SK-N-SH (cell line): ENCODE measurements at regions of chr7 and their contacts with region 1.

Region 1: GRCh38 chr7:44463169-44463808 is 27.2 kb downstream of the NUDCD3 start:
- DNase-seq: no peak
- H3K4me3 ChIP-seq: no peak overlapping the region
- H3K27ac ChIP-seq: no peak overlapping the region
- H3K4me1 ChIP-seq: peaks cover 2 to 28% of the 10 kb centered on the region in 2 experiments; a peak in 2 of 4 replicates
- H3K27me3 ChIP-seq: no peaks in the 10 kb centered on the region
- CTCF ChIP-seq: peak; percentile 56
- EP300 ChIP-seq: no peak
- RAD21 ChIP-seq: no peak

Region 2: GRCh38 chr7:44386139-44386913 is 77.0 kb before region 1 on chr7:
- CTCF ChIA-PET with region 1: no interaction called
- POLR2A ChIA-PET with region 1: no interaction called
- DNase-seq: no peak
- H3K4me3 ChIP-seq: no peak overlapping the region
- H3K27ac ChIP-seq: no peak overlapping the region
- H3K4me1 ChIP-seq: peaks cover 0 to 13% of the 10 kb centered on the region in 2 experiments; a peak in 2 of 4 replicates
- H3K27me3 ChIP-seq: no peaks in the 10 kb centered on the region
- CTCF ChIP-seq: no peak
- EP300 ChIP-seq: no peak
- RAD21 ChIP-seq: no peak

Region 3: GRCh38 chr7:44449584-44449928 is 13.7 kb before region 1 on chr7:
- CTCF ChIA-PET with region 1: interaction called, 10 read pairs
- POLR2A ChIA-PET with region 1: no interaction called
- DNase-seq: no peak
- H3K4me3 ChIP-seq: no peak overlapping the region
- H3K27ac ChIP-seq: peak overlapping the region in 1 of 2 experiments; percentile 84; a peak in 2 of 4 replicates
- H3K4me1 ChIP-seq: peaks cover 6 to 10% of the 10 kb centered on the region in 2 experiments; a peak in 2 of 4 replicates
- H3K27me3 ChIP-seq: no peaks in the 10 kb centered on the region
- CTCF ChIP-seq: no peak
- EP300 ChIP-seq: no peak
- RAD21 ChIP-seq: no peak

Region 4: DNA sequence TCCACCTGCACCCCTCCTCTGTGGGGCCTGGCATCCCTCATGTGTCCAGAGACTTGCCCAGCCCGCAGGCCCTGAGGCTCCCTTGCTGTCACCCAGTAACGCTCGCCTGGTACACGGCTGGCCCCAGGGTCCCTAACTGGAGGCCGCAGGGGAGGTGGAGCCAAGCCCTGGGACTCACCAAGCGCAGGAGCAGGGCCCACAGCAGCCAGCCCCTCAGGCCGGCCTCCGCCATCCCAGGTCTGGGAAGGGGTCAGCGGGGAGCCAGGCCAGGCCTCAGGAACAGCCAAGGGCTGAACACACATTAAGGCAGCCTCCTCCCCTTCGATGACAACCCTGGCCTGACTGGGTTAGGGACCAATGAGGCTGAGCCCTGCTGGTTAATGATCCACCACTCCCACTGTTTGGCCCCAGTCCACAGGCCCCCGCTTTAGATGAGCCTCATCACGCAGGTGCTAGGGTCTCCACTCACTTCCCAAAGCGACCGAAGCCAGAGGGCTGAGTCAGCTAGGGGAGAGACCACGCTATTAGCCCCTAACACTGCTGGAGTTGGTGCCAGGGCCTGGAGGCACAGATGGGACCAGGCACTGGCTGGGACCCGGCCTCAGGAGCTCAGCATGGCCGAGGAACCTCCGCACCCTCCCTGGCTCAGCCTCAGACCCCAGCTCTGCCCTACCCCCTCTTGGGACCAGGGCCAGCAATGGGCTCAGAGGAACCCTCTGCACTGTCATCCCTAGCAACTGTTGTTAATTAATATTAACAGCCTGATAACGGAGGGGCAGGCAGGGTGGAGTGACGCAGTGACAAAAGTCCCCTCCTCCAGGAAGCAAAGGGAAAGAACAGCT is 78.0 kb after region 1 on chr7 and contains the start of gene NPC1L1:
- CTCF ChIA-PET with region 1: no interaction called
- POLR2A ChIA-PET with region 1: no interaction called
- DNase-seq: peak; percentile 62
- H3K4me3 ChIP-seq: no peak within 1 kb of the TSS
- H3K27ac ChIP-seq: no peak within 1 kb of the TSS; a peak in 1 of 4 replicates
- H3K4me1 ChIP-seq: peaks cover 0 to 16% of the 10 kb centered on the region in 2 experiments; a peak in 1 of 4 replicates
- H3K27me3 ChIP-seq: no peaks in the 10 kb centered on the region
- CTCF ChIP-seq: no peak
- EP300 ChIP-seq: no peak
- RAD21 ChIP-seq: no peak
- polyA plus RNA-seq, gene NPC1L1: 0.03 TPM in 1 of 2 replicates, not detected in the other